IMR-90 (cell line): ENCODE measurements at regions of chr5 and their contacts with region 1.

Region 1: GRCh38 chr5:172541099-172541771 is 86.9 kb upstream of the SH3PXD2B start:
- DNase-seq: no peak
- ATAC-seq: no peak
- H3K4me3 ChIP-seq: no peak overlapping the region
- H3K27ac ChIP-seq: no peak overlapping the region
- H3K4me1 ChIP-seq: no peaks in the 10 kb centered on the region
- H3K27me3 ChIP-seq: peaks cover 41% of the 10 kb centered on the region
- CTCF ChIP-seq: no peak
- POLR2A ChIP-seq: no peak
- RAD21 ChIP-seq: no peak

Region 2: DNA sequence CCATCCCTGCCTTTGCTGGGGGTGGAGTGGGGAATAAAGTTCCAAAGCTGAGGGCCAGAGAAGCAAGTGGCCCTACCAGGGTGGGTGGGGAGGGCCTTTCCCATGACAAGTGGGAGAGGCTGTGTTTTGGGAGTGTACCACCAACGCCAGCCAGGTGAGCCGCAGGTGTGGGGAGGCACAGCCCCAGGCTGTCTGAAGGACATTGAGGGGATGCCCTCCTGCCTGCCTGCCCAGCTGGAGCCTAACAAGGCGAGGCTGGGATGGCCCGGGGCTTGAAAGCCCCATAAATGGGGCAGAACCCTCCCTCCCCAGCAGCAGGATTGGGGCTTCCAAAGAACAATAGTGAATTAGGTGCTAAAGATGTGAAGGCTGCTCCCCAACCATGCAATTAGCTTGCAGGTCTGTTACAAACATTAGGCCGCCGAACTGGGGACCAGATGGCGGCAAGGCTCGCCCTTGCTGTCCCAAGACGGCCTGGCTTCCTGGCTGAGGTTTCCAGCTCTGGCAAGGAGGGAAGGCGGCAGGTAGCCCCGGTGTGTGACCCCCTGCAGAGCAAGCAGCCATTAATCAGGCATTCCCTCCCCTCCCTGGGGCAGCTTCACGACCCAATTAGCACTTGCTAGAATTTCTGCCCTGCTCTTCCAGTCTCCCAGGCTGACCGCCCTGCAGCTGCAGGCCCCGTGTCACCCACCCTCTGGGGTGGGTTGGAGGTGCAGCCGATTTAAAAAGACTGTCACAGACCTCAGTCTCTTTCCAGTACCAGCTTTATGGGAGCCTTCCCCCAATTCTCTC is 1078.9 kb before region 1 on chr5:
- CTCF ChIA-PET with region 1: no interaction called
- POLR2A ChIA-PET with region 1: no interaction called
- dilution Hi-C with region 1: no loop called
- in situ Hi-C with region 1: no loop called
- intact Hi-C with region 1: no loop called
- DNase-seq: no peak
- ATAC-seq: no peak
- H3K4me3 ChIP-seq: no peak overlapping the region
- H3K27ac ChIP-seq: no peak overlapping the region
- H3K4me1 ChIP-seq: no peaks in the 10 kb centered on the region
- H3K27me3 ChIP-seq: peaks cover 20% of the 10 kb centered on the region; the same call in 1 of the 2 replicates
- CTCF ChIP-seq: no peak
- POLR2A ChIP-seq: no peak
- RAD21 ChIP-seq: no peak

Region 3: GRCh38 chr5:172429201-172429940 is 111.9 kb before region 1 on chr5:
- CTCF ChIA-PET with region 1: no interaction called
- POLR2A ChIA-PET with region 1: no interaction called
- dilution Hi-C with region 1: no loop called
- in situ Hi-C with region 1: no loop called
- intact Hi-C with region 1: no loop called
- DNase-seq: peak; percentile 82
- ATAC-seq: peak; percentile 80
- H3K4me3 ChIP-seq: no peak overlapping the region
- H3K27ac ChIP-seq: peak overlapping the region; percentile 39; the same call in 1 of the 2 replicates
- H3K4me1 ChIP-seq: peaks cover 26% of the 10 kb centered on the region; the same call in 1 of the 2 replicates
- H3K27me3 ChIP-seq: no peaks in the 10 kb centered on the region
- CTCF ChIP-seq: no peak
- POLR2A ChIP-seq: no peak
- RAD21 ChIP-seq: no peak

Region 4: DNA sequence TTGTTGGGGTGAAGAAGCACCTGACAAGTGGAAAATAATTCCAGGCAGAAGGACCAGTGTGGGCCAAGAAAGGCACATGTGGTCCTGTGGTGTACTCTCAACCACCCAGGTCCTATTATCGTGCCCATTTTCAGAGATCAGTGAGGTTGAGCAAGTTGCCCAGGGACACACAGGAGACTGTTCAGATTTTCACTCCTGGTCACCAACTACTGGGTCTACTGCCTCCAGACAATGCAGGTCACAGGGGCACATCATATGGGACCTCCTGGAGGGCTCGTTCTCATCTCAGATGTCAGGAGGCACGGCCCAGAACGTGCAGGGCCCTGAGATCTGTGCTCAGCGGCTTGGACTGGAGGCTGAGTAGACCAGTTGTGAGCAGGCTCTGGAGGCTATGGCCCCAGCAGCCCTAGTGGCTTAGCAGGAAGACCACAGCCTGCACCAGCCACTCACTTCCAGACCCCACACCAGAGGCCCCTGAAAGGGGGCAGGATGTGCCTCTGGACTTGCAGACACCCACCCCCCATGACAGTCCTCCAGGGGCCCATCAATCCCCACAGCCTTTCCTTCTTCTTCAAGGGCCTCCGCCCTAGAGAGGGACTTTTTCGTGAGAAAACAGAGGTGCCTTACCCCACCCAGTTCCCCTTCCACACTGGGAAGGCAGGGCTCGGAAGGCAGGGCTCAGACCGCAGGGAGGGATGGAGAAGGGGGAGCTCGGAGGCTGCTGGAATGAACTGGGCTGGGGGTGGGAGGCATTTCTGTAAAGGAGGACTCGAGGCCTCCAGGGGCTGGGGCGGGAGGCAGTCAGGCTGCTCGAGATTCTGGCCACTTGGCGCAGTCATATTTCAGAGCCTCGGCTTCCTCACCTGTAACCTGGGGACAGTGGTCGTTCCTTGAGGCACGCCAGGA is 17.1 kb after region 1 on chr5:
- CTCF ChIA-PET with region 1: no interaction called
- POLR2A ChIA-PET with region 1: no interaction called
- dilution Hi-C with region 1: no loop called
- in situ Hi-C with region 1: no loop called
- intact Hi-C with region 1: loop called (anchors 1 kb)
- DNase-seq: no peak
- ATAC-seq: no peak
- H3K4me3 ChIP-seq: peak overlapping the region; percentile 3; the same call in 1 of the 2 replicates
- H3K27ac ChIP-seq: peak overlapping the region; percentile 13; the same call in 1 of the 2 replicates
- H3K4me1 ChIP-seq: peaks cover 10% of the 10 kb centered on the region; the same call in 1 of the 2 replicates
- H3K27me3 ChIP-seq: peaks cover 49% of the 10 kb centered on the region
- CTCF ChIP-seq: no peak
- POLR2A ChIP-seq: no peak
- RAD21 ChIP-seq: no peak

Region 5: GRCh38 chr5:172733131-172733973 is 192.1 kb after region 1 on chr5:
- CTCF ChIA-PET with region 1: no interaction called
- POLR2A ChIA-PET with region 1: no interaction called
- dilution Hi-C with region 1: no loop called
- in situ Hi-C with region 1: no loop called
- intact Hi-C with region 1: no loop called
- DNase-seq: peak; percentile 90
- ATAC-seq: peak; percentile 89
- H3K4me3 ChIP-seq: no peak overlapping the region
- H3K27ac ChIP-seq: peak overlapping the region; percentile 51
- H3K4me1 ChIP-seq: peaks cover 18% of the 10 kb centered on the region
- H3K27me3 ChIP-seq: no peaks in the 10 kb centered on the region
- CTCF ChIP-seq: no peak
- POLR2A ChIP-seq: peak; percentile 45; the same call in 1 of the 2 replicates
- RAD21 ChIP-seq: no peak; the same call in 1 of the 2 replicates